Psoas muscle (tissue), 8 donors: ENCODE measurements at regions of chr20 and their contacts with region 1.

Region 1: DNA sequence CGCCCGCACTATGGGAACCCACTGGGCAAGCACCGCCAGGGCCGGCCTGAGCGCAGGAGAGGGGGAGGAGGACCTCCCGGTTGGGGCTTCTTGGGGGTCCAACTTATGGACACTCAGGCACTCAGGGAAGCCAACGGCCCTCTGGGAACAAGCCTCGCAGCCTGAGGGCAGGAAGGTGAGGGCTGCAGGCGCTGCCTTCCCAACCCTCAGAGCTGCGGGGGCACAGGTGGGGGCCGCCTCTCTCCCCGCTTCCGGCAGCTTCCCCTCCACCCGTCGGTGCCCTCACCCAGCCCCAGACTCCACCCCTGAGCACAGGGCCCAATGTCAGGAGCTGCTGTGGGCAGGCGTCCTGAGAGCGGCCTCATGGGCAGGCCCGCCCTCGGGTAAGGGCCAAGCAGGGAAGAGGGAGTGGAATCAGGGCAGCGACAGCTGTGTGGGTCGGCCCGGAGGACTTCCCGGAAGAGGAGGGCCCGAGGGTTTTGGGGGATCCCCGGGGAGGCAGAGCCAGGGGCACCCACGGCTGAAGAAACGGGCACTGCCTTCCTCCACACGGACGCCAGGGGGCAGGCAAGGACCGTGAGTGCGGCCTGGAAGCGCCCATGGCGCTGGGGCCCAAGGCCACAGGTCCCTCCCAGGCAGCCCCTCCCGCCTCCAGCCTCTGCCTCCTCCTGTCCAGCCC is 488 bp upstream of the PTK6 start:
- DNase-seq: peak; percentile 86 to 91
- ATAC-seq: peak; percentile 87 to 95 (median 89)
- H3K4me3 ChIP-seq: peak overlapping the region; percentile 34
- H3K27ac ChIP-seq: no peak overlapping the region
- H3K4me1 ChIP-seq: no peaks in the 10 kb centered on the region
- H3K27me3 ChIP-seq: peaks cover 0 to 40% (median 13%) of the 10 kb centered on the region in 3 donors
- CTCF ChIP-seq: peak; percentile 96

Region 2: GRCh38 chr20:63612276-63612928 is 74.7 kb after region 1 on chr20:
- intact Hi-C with region 1: loop called (anchors 2 to 5 kb)
- DNase-seq: no peak
- ATAC-seq: peak in 1 of 4 donors; percentile 15
- H3K4me3 ChIP-seq: no peak overlapping the region
- H3K27ac ChIP-seq: no peak overlapping the region
- H3K4me1 ChIP-seq: no peaks in the 10 kb centered on the region
- H3K27me3 ChIP-seq: no peaks in the 10 kb centered on the region
- CTCF ChIP-seq: no peak

Region 3: DNA sequence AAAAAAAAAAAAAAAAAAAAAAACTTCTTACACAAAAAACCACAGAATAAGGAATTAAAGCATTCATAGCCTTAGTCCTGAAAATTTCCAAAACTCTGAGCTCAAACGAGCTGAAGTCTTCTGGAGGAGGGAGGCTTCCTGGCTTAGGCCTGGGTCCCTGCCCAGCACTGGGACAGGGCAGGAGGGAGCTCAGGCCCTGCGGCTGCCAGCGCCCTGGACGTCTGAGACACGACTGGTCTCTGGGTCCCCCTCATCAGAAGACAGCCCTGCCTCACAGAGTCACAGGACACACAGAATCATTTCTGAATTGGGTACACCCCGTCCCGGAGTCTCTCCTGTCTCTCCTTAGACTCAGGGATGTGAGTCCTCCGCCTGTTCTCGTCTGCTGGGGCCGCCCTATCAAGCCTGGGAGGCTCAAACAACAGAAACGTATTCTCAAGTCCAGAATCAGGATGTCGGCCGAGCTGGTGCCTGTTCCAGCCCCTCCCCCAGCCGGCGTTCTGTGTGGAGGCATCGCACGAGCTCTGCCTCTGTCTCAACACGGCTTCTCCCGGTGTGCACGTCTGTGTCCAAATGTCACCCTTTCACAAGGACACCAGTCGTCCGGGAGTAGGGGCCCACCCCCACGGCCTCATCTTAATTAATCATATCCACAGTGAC is 254.0 kb after region 1 on chr20:
- intact Hi-C with region 1: loop called (anchors 5 kb)
- DNase-seq: no peak
- ATAC-seq: no peak
- H3K4me3 ChIP-seq: no peak overlapping the region
- H3K27ac ChIP-seq: no peak overlapping the region
- H3K4me1 ChIP-seq: no peaks in the 10 kb centered on the region
- H3K27me3 ChIP-seq: no peaks in the 10 kb centered on the region
- CTCF ChIP-seq: no peak